CD8-positive, alpha-beta T cell (primary cell): ENCODE measurements at regions of chr6 and their contacts with region 1.

Region 1: DNA sequence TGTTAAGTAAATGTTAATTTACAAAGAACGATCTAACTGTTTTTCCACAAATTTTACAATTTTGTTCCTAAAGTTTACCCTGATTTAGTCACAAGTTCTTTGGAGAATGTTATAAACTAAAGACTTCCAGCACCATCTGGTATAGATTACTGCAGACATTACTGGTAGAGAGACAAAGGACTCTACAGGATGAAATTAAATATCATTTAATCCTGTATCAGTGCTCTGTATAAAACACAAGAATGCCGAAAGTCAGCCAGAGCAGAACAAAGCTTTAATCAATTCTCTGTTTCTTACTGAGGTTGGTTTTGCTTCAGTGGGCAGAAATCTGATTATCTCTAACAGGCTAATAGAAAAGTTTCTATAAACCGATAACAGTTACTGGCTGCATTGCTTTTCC is 763.6 kb downstream of the TENT5A start:
- DNase-seq: no peak
- ATAC-seq: no peak
- H3K4me3 ChIP-seq: no peak overlapping the region
- H3K4me3 Mint-ChIP-seq: no peak overlapping the region
- H3K27ac ChIP-seq: no peak overlapping the region
- H3K27ac Mint-ChIP-seq: no peak overlapping the region
- H3K4me1 ChIP-seq: no peaks in the 10 kb centered on the region
- H3K4me1 Mint-ChIP-seq: no peaks in the 10 kb centered on the region
- H3K27me3 ChIP-seq: no peaks in the 10 kb centered on the region
- H3K27me3 Mint-ChIP-seq: no peaks in the 10 kb centered on the region
- CTCF ChIP-seq: no peak

Region 2: DNA sequence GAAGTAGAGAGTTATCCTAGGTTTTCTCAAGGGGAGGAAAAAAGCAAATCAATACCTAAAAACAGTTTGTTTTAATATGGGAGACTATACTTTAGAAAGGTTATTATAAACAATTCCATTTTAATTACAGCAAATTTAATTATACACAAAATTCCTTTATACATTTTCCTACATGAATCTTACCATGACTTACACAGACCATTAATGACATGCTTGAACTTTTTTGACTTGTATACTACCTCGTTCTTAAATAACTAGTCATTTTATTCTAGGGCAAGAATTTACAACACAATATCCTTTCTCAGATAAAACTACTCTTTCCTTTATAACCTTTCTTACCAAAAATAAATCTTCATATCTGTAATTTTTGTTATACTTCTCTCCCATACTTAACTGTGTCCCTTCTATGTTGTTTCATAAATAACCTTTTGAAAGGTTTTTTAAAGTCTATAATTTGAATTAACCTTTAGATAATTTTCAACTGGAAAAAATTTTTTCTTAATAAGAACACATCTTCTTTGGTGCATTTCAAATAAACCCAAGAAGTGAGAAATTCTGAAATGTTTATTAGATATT is 34.2 kb after region 1 on chr6:
- CTCF ChIA-PET with region 1: no interaction called
- POLR2A ChIA-PET with region 1: no interaction called
- intact Hi-C with region 1: no loop called
- DNase-seq: no peak
- ATAC-seq: no peak
- H3K4me3 ChIP-seq: no peak overlapping the region
- H3K4me3 Mint-ChIP-seq: no peak overlapping the region
- H3K27ac ChIP-seq: no peak overlapping the region
- H3K27ac Mint-ChIP-seq: no peak overlapping the region
- H3K4me1 ChIP-seq: no peaks in the 10 kb centered on the region
- H3K4me1 Mint-ChIP-seq: no peaks in the 10 kb centered on the region
- H3K27me3 ChIP-seq: no peaks in the 10 kb centered on the region
- H3K27me3 Mint-ChIP-seq: no peaks in the 10 kb centered on the region
- CTCF ChIP-seq: no peak

Region 3: DNA sequence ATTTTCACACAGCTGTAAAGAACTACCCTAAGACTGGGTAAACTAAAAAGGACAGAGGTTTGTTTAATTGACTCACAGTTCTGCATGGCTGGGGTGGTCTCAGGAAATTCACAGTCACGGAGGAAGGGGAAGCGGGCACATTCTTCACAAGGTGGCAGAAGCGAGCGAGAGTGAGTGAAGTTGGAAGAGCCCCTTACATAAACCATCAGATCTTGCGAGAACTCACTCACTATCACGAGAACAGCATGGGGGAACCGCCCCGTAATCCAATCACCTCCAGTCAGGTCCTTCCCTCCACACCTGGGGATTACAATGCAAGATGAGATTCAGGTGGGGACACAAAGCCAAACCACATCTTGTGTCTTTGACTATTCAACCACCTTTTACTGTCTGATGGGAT is 63.1 kb after region 1 on chr6:
- CTCF ChIA-PET with region 1: no interaction called
- POLR2A ChIA-PET with region 1: no interaction called
- intact Hi-C with region 1: loop called in 1 of 2 experiments (anchors 2 kb)
- DNase-seq: no peak
- ATAC-seq: no peak
- H3K4me3 ChIP-seq: no peak overlapping the region
- H3K4me3 Mint-ChIP-seq: no peak overlapping the region
- H3K27ac ChIP-seq: no peak overlapping the region
- H3K27ac Mint-ChIP-seq: no peak overlapping the region
- H3K4me1 ChIP-seq: no peaks in the 10 kb centered on the region
- H3K4me1 Mint-ChIP-seq: no peaks in the 10 kb centered on the region
- H3K27me3 ChIP-seq: no peaks in the 10 kb centered on the region
- H3K27me3 Mint-ChIP-seq: no peaks in the 10 kb centered on the region
- CTCF ChIP-seq: no peak